H1 (cell line): ENCODE measurements at regions of chr1 and their contacts with region 1.

Region 1: GRCh38 chr1:225772323-225772768 is 5.3 kb upstream of the SRP9 start:
- DNase-seq: peak; percentile 67 to 86
- H3K4me3 ChIP-seq: no peak overlapping the region
- H3K27ac ChIP-seq: no peak overlapping the region
- H3K4me1 ChIP-seq: peaks cover 4 to 12% (median 9%) of the 10 kb centered on the region in 4 experiments; a peak in 5 of 7 replicates
- H3K27me3 ChIP-seq: no peaks in the 10 kb centered on the region; a peak in 1 of 7 replicates
- CTCF ChIP-seq: peak; percentile 92 to 98 (median 95)
- EP300 ChIP-seq: no peak
- POLR2A ChIP-seq: no peak
- RAD21 ChIP-seq: peak; percentile 98

Region 2: DNA sequence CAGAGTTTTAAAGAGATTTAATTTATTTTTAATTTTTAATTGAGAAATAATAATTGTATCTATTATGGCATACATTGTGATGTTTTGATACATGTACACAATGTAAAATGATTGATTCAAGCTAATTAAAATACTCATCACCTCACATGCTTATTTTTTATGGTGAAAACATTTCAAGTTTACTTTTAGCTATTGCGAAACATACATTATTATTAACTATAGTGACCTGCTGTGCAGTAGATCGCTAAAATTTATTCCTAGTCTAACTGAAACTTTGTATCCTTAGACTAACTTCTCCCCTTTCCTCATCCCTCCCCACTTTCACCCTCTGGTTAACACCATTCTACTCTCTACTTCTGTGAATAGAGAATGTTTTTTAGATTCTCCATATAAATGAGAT is 651.3 kb before region 1 on chr1:
- CTCF ChIA-PET with region 1: no interaction called
- POLR2A ChIA-PET with region 1: no interaction called
- DNase-seq: no peak
- H3K4me3 ChIP-seq: no peak overlapping the region
- H3K27ac ChIP-seq: no peak overlapping the region
- H3K4me1 ChIP-seq: 0 out of 7 replicates have a peak, but pooled peaks cover 0 to 2% (median 0%) of the 10 kb centered on the region in 4 experiments
- H3K27me3 ChIP-seq: no peaks in the 10 kb centered on the region
- CTCF ChIP-seq: no peak
- EP300 ChIP-seq: no peak
- POLR2A ChIP-seq: no peak
- RAD21 ChIP-seq: no peak

Region 3: DNA sequence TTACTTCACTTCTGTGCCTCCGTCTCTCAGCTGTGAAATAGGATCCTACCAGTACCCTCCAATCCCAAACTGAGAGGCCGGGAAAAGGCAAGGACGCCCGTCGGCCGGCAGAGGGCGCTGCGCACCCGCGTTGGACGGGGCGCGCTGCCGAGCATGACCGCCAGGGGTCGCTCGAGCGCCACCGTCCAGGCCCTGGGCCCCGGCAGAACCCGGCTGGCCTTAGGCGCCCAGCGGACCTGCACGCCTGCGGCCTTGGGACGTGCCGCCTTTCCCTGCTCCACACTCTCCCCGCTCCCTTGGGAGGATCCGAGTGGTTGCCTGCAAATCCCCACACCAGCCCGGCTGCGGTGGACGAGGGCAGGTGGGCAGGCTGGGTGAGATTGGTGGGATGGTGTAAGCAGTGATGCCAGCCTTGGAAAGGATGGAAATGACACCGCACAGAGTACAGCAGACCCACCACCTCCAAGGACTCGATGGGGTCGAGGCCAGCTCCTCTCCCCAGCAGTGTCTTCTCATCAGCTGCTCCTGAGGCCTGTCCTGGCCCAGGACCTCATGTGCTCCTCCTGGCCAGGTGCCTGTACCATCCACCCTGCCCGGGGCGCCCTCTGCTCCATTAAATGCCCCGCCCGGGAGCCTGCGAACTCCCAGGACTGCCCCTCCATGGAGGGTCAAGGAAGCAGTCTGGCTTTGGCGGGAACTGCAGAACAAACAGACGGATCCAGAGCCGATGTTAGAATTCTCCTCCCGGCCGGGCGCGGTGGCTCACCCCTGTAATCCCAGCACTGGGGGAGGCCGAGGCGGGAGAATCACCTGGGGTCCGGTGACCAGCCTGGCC is 297.1 kb before region 1 on chr1:
- CTCF ChIA-PET with region 1: interaction called, 229 read pairs
- POLR2A ChIA-PET with region 1: interaction called, 20 read pairs
- DNase-seq: peak in 1 of 2 experiments; percentile 96
- H3K4me3 ChIP-seq: no peak overlapping the region
- H3K27ac ChIP-seq: no peak overlapping the region
- H3K4me1 ChIP-seq: peaks cover 0 to 6% (median 1%) of the 10 kb centered on the region in 4 experiments; a peak in 4 of 7 replicates
- H3K27me3 ChIP-seq: no peaks in the 10 kb centered on the region
- CTCF ChIP-seq: peak; percentile 100
- EP300 ChIP-seq: no peak
- POLR2A ChIP-seq: no peak
- RAD21 ChIP-seq: peak; percentile 100

Region 4: GRCh38 chr1:225517697-225518096 is 254.6 kb before region 1 on chr1:
- CTCF ChIA-PET with region 1: interaction called, 10 read pairs
- POLR2A ChIA-PET with region 1: interaction called, 3 read pairs
- DNase-seq: no peak
- H3K4me3 ChIP-seq: no peak overlapping the region
- H3K27ac ChIP-seq: no peak overlapping the region
- H3K4me1 ChIP-seq: peaks cover 2 to 8% (median 6%) of the 10 kb centered on the region in 4 experiments; a peak in 3 of 7 replicates
- H3K27me3 ChIP-seq: no peaks in the 10 kb centered on the region
- CTCF ChIP-seq: no peak
- EP300 ChIP-seq: no peak
- POLR2A ChIP-seq: no peak
- RAD21 ChIP-seq: no peak

Region 5: GRCh38 chr1:225567590-225568194 is 204.7 kb before region 1 on chr1:
- CTCF ChIA-PET with region 1: interaction called, 17 read pairs
- POLR2A ChIA-PET with region 1: interaction called, 4 read pairs
- DNase-seq: no peak
- H3K4me3 ChIP-seq: no peak overlapping the region
- H3K27ac ChIP-seq: no peak overlapping the region
- H3K4me1 ChIP-seq: peaks cover 0 to 6% (median 0%) of the 10 kb centered on the region in 4 experiments; a peak in 2 of 7 replicates
- H3K27me3 ChIP-seq: no peaks in the 10 kb centered on the region
- CTCF ChIP-seq: peak in 1 of 3 experiments; percentile 49; a peak in 1 of 4 replicates
- EP300 ChIP-seq: no peak
- POLR2A ChIP-seq: no peak
- RAD21 ChIP-seq: peak; percentile 40 to 47

Region 6: DNA sequence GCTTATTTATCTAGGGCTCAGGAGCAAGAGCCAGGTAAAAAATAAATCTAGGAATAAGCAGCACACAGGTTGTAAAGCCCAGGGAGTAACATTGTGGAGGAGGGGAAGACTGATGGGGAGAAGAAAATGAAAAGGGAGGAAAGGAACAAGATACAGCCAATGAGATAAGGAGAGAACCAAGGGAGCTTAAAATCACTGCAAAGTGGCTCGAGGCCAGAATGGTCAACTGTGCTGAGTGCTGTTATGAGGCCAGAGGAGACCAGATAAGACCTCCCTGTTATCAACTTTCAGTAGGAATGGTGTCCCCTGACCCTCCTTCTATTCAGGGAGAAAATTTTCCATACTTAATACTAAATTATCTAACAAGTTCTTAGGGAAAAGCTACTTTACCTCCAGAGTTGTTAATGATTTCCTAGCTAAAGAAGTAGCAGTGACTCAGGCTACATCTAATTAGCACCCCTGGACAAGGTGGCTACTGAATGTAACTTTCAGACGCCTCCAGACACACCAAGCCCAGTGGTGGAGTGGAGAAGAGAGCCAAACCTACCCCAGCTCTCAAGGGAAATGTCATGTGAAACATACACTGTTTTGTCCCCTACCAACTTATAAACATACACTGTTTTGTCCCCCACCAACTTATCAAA is 144.9 kb before region 1 on chr1:
- CTCF ChIA-PET with region 1: interaction called, 10 read pairs
- POLR2A ChIA-PET with region 1: no interaction called
- DNase-seq: no peak
- H3K4me3 ChIP-seq: no peak overlapping the region; a peak in 1 of 8 replicates
- H3K27ac ChIP-seq: no peak overlapping the region
- H3K4me1 ChIP-seq: peaks cover 0 to 7% (median under 1%) of the 10 kb centered on the region in 4 experiments; a peak in 3 of 7 replicates
- H3K27me3 ChIP-seq: no peaks in the 10 kb centered on the region
- CTCF ChIP-seq: no peak
- EP300 ChIP-seq: no peak
- POLR2A ChIP-seq: no peak
- RAD21 ChIP-seq: no peak

Region 7: DNA sequence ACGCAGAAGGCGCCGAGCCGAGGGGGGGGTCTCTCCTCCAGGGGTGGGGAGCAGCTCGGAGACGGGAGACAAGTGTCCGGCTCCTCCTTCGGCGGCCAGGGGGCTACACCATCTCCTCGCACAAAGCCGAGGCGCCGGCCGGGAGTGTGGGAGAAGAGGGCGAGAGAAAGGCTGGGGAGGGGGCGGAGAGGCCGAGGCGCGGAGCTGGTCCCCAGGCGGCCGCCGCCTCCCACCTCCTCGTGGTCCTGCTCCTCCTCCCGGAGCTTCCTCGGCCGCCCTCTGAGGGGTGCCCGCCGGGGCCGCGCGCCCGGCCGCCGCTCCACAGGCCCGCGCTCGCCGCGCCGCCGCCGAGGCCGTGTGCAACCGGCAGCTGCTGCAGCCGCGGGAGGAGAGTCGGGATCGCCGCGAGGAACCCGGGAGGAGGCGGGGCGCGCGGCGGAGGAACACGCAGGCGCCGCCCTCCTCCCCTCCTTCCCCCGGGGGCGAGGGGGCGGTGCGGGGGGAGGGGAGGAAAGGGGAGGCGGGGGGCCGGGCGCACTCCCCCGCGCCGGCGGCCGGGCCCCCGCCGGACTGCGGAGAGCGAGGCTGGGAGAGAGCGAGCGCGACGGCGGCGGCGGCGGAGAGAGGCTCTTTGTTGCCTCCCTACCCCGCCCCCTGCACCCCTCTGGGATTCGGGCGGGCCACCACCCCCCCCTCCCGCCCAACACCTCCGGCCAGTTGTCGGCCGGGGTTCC is 119.5 kb before region 1 on chr1 and contains the start of gene ENAH:
- CTCF ChIA-PET with region 1: interaction called, 16 read pairs
- POLR2A ChIA-PET with region 1: interaction called, 20 read pairs
- DNase-seq: peak in 1 of 2 experiments; percentile 83
- H3K4me3 ChIP-seq: peak within 1 kb of the TSS; percentile 94 to 100 (median 96)
- H3K27ac ChIP-seq: peak within 1 kb of the TSS; percentile 93
- H3K4me1 ChIP-seq: peaks cover 0 to 3% (median 0%) of the 10 kb centered on the region in 4 experiments; a peak in 2 of 7 replicates
- H3K27me3 ChIP-seq: no peaks in the 10 kb centered on the region
- CTCF ChIP-seq: no peak
- EP300 ChIP-seq: peak in 1 of 2 experiments; percentile 67; a peak in 1 of 3 replicates
- POLR2A ChIP-seq: peak in 1 of 2 experiments; percentile 84; a peak in 2 of 3 replicates
- RAD21 ChIP-seq: no peak
- total RNA-seq, gene ENAH: 318 and 335 TPM in 2 replicates